PC-9 (cell line): ENCODE measurements at regions of chr6 and their contacts with region 1.

Region 1: GRCh38 chr6:142692942-142693341 is 252.0 kb downstream of the HIVEP2 start:
- DNase-seq: peak; percentile 37 to 58
- H3K4me3 ChIP-seq: no peak overlapping the region
- H3K27ac ChIP-seq: no peak overlapping the region
- H3K4me1 ChIP-seq: peaks cover 21% of the 10 kb centered on the region; the same call in 1 of the 2 replicates
- H3K27me3 ChIP-seq: no peaks in the 10 kb centered on the region
- CTCF ChIP-seq: peak; percentile 97

Region 2: GRCh38 chr6:142146828-142147662 is 545.9 kb before region 1 on chr6 and contains the starts of genes NMBR and VTA1:
- CTCF ChIA-PET with region 1: no interaction called
- POLR2A ChIA-PET with region 1: no interaction called
- intact Hi-C with region 1: loop called (anchors 10 kb)
- DNase-seq: peak; percentile 95
- H3K4me3 ChIP-seq: peak within 1 kb of the TSS; percentile 92
- H3K27ac ChIP-seq: peak within 1 kb of the TSS; percentile 25; the same call in 1 of the 2 replicates
- H3K4me1 ChIP-seq: peaks cover 19% of the 10 kb centered on the region; the same call in 1 of the 2 replicates
- H3K27me3 ChIP-seq: no peaks in the 10 kb centered on the region
- CTCF ChIP-seq: peak; percentile 84
- total RNA-seq, gene NMBR: 0.35 TPM in 1 of 2 replicates, not detected in the other
- total RNA-seq, gene VTA1: 29.5 and 52.0 TPM in 2 replicates

Region 3: GRCh38 chr6:142566628-142567396 is 126.1 kb before region 1 on chr6:
- CTCF ChIA-PET with region 1: interaction called, 3 read pairs
- POLR2A ChIA-PET with region 1: no interaction called
- intact Hi-C with region 1: loop called (anchors 2 kb)
- DNase-seq: peak; percentile 44 to 56
- H3K4me3 ChIP-seq: no peak overlapping the region
- H3K27ac ChIP-seq: no peak overlapping the region
- H3K4me1 ChIP-seq: peaks cover 20% of the 10 kb centered on the region
- H3K27me3 ChIP-seq: no peaks in the 10 kb centered on the region
- CTCF ChIP-seq: peak; percentile 90

Region 4: DNA sequence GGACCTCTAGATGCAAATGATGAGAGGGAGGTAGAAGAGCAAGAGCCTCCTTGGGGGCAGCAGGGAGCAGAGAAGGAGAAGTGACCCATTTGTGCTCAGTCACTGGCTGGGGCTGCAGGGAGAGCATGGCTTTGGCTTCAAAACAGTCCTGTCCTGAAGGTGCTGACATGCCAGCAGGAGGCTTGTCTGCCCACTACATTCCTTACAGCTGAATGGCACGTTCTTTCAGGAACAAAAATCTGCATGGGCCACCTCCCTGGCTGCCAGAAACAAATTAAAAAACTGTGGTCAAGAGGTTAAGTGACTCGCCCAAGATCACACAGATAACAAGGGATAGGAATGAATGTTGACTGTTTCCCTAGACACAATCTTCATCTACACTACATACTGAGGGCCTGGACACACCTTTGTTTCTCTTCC is 63.3 kb after region 1 on chr6:
- CTCF ChIA-PET with region 1: no interaction called
- POLR2A ChIA-PET with region 1: interaction called, 10 read pairs
- intact Hi-C with region 1: loop called (anchors 2 kb)
- DNase-seq: peak; percentile 86 to 97
- H3K4me3 ChIP-seq: no peak overlapping the region
- H3K27ac ChIP-seq: peak overlapping the region; percentile 54
- H3K4me1 ChIP-seq: peaks cover 22% of the 10 kb centered on the region
- H3K27me3 ChIP-seq: no peaks in the 10 kb centered on the region
- CTCF ChIP-seq: 0 out of 2 replicates have a peak, but pooled peaks have one; percentile 22

Region 5: GRCh38 chr6:142845624-142846458 is 152.9 kb after region 1 on chr6:
- CTCF ChIA-PET with region 1: no interaction called
- POLR2A ChIA-PET with region 1: interaction called, 4 read pairs
- intact Hi-C with region 1: loop called (anchors 2 kb)
- DNase-seq: peak; percentile 86
- H3K4me3 ChIP-seq: peak overlapping the region; percentile 51; the same call in 1 of the 2 replicates
- H3K27ac ChIP-seq: peak overlapping the region; percentile 89
- H3K4me1 ChIP-seq: peaks cover 84% of the 10 kb centered on the region
- H3K27me3 ChIP-seq: no peaks in the 10 kb centered on the region
- CTCF ChIP-seq: no peak

Region 6: DNA sequence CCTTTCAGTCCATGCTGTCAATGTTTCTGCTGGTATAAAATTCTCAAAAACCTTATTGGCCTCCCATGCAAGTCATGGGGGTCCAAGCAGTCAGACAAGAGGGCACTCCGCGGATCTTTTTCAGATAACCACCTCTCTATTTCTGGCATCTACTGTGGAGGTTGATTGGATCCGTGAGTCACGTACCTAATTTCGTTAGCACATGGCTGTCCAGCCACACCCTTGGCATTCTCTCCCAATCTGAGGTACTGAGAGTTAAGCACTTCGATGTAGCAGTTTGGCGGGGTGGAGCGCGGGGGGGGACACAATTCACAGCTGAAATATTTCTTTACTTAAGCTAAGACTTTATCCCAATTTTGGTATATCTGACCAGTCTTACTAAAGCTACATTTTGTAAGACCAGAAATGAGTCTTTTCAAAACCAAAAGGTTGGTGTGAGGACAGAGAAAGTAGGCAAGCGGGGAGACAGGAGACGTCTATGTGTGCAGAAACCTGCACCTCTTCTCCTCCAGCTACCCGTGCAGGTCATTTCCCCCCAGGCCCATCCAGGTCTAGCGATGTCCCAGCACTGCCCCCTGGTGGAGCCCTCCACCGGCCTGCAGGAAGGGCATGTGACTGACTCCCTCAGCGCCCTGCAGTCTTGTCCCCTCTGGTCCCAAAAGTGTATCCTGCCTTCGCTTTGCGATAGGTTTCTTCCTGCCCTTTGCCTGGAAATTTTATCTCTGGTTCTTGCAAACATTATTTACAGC is 644.4 kb after region 1 on chr6:
- CTCF ChIA-PET with region 1: no interaction called
- POLR2A ChIA-PET with region 1: no interaction called
- intact Hi-C with region 1: loop called (anchors 1 kb)
- DNase-seq: peak in 1 of 2 experiments; percentile 26
- H3K4me3 ChIP-seq: no peak overlapping the region
- H3K27ac ChIP-seq: peak overlapping the region; percentile 87
- H3K4me1 ChIP-seq: peaks cover 29% of the 10 kb centered on the region
- H3K27me3 ChIP-seq: no peaks in the 10 kb centered on the region
- CTCF ChIP-seq: 0 out of 2 replicates have a peak, but pooled peaks have one; percentile 36

Region 7: GRCh38 chr6:144013486-144013909 is 1320.6 kb after region 1 on chr6:
- CTCF ChIA-PET with region 1: no interaction called
- POLR2A ChIA-PET with region 1: no interaction called
- intact Hi-C with region 1: loop called (anchors 10 kb)
- DNase-seq: peak; percentile 62 to 63
- H3K4me3 ChIP-seq: no peak overlapping the region
- H3K27ac ChIP-seq: no peak overlapping the region
- H3K4me1 ChIP-seq: no peaks in the 10 kb centered on the region
- H3K27me3 ChIP-seq: peaks cover 4% of the 10 kb centered on the region; the same call in 1 of the 2 replicates
- CTCF ChIP-seq: peak; percentile 88